GM12878 (cell line): ENCODE measurements at regions of chr16 and their contacts with region 1.

Region 1: GRCh38 chr16:20647736-20648135 is 49.7 kb downstream of the ACSM1 start:
- DNase-seq: no peak
- ATAC-seq: no peak
- H3K4me3 ChIP-seq: no peak overlapping the region
- H3K27ac ChIP-seq: no peak overlapping the region
- H3K4me1 ChIP-seq: no peaks in the 10 kb centered on the region
- H3K27me3 ChIP-seq: no peaks in the 10 kb centered on the region
- CTCF ChIP-seq: no peak
- EP300 ChIP-seq: no peak
- POLR2A ChIP-seq: no peak
- RAD21 ChIP-seq: no peak

Region 2: DNA sequence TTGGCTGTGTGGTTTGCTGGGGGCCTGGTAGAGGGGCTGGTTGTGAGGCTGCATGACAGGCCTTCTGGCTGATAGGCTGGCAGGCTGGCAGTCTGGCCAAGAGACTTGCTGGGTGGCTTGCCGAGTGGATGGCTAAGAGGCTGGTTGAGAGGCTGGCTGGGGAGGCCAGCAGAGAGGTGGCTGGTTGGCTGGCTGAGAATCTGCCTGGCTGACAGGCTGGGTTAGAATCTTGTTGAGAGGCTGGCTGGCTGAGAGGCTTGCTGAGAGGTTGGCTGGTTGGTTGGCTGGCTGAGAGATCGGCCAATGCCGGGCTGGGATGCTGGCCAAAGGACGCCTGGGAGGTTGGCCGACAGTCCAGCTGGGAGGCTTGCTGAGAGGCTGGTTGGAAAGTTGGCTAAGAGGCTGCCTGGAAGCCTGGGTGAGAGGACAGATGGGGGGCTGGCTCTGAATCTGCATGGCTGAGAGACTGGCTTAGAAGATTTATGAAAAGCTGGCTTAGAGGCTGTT is 35.7 kb before region 1 on chr16:
- CTCF ChIA-PET with region 1: no interaction called
- POLR2A ChIA-PET with region 1: no interaction called
- RAD21 ChIA-PET with region 1: no interaction called
- SMC1A ChIA-PET with region 1: no interaction called
- in situ Hi-C with region 1: loop called (anchors 5 kb)
- intact Hi-C with region 1: no loop called
- DNase-seq: no peak
- ATAC-seq: no peak
- H3K4me3 ChIP-seq: no peak overlapping the region
- H3K27ac ChIP-seq: no peak overlapping the region
- H3K4me1 ChIP-seq: no peaks in the 10 kb centered on the region
- H3K27me3 ChIP-seq: no peaks in the 10 kb centered on the region; a peak in 1 of 4 replicates
- CTCF ChIP-seq: no peak
- EP300 ChIP-seq: no peak
- POLR2A ChIP-seq: no peak
- RAD21 ChIP-seq: no peak

Region 3: GRCh38 chr16:21162661-21163151 is 515.0 kb after region 1 on chr16:
- CTCF ChIA-PET with region 1: no interaction called
- POLR2A ChIA-PET with region 1: no interaction called
- RAD21 ChIA-PET with region 1: no interaction called
- SMC1A ChIA-PET with region 1: no interaction called
- in situ Hi-C with region 1: no loop called
- intact Hi-C with region 1: no loop called
- DNase-seq: no peak
- ATAC-seq: no peak
- H3K4me3 ChIP-seq: no peak overlapping the region
- H3K27ac ChIP-seq: no peak overlapping the region
- H3K4me1 ChIP-seq: peaks cover 9% of the 10 kb centered on the region
- H3K27me3 ChIP-seq: no peaks in the 10 kb centered on the region
- CTCF ChIP-seq: no peak
- EP300 ChIP-seq: no peak
- POLR2A ChIP-seq: no peak
- RAD21 ChIP-seq: no peak